ENCODE measurements at regions of chr1 and their contacts with region 1.

Region 1: GRCh38 chr1:230084138-230084880 is 17.3 kb downstream of the GALNT2 start:
- DNase-seq: peak; percentile 88
- ATAC-seq: peak; percentile 94
- H3K4me3 Mint-ChIP-seq: peak overlapping the region; percentile 9
- H3K27ac Mint-ChIP-seq: peak overlapping the region; percentile 88
- H3K4me1 Mint-ChIP-seq: peaks cover 67% of the 10 kb centered on the region
- H3K27me3 Mint-ChIP-seq: peaks cover 2% of the 10 kb centered on the region
- CTCF ChIP-seq: no peak

Region 2: GRCh38 chr1:229972600-229973296 is 111.6 kb before region 1 on chr1:
- CTCF ChIA-PET with region 1: no interaction called
- POLR2A ChIA-PET with region 1: no interaction called
- intact Hi-C with region 1: no loop called
- DNase-seq: no peak
- ATAC-seq: no peak
- H3K4me3 Mint-ChIP-seq: no peak overlapping the region
- H3K27ac Mint-ChIP-seq: no peak overlapping the region
- H3K4me1 Mint-ChIP-seq: no peaks in the 10 kb centered on the region
- H3K27me3 Mint-ChIP-seq: peaks cover 7% of the 10 kb centered on the region
- CTCF ChIP-seq: peak; percentile 30

Region 3: GRCh38 chr1:230031131-230031530 is 53.2 kb before region 1 on chr1:
- CTCF ChIA-PET with region 1: no interaction called
- POLR2A ChIA-PET with region 1: no interaction called
- intact Hi-C with region 1: no loop called
- DNase-seq: peak; percentile 16
- ATAC-seq: peak; percentile 81
- H3K4me3 Mint-ChIP-seq: no peak overlapping the region
- H3K27ac Mint-ChIP-seq: no peak overlapping the region
- H3K4me1 Mint-ChIP-seq: peaks cover 15% of the 10 kb centered on the region
- H3K27me3 Mint-ChIP-seq: no peaks in the 10 kb centered on the region
- CTCF ChIP-seq: no peak

Region 4: GRCh38 chr1:230067871-230068620 is 16.3 kb before region 1 on chr1:
- CTCF ChIA-PET with region 1: interaction called, 21 read pairs
- POLR2A ChIA-PET with region 1: interaction called, 20 read pairs
- intact Hi-C with region 1: no loop called
- DNase-seq: peak; percentile 26
- ATAC-seq: no peak
- H3K4me3 Mint-ChIP-seq: peak overlapping the region; percentile 88
- H3K27ac Mint-ChIP-seq: peak overlapping the region; percentile 90
- H3K4me1 Mint-ChIP-seq: peaks cover 54% of the 10 kb centered on the region
- H3K27me3 Mint-ChIP-seq: no peaks in the 10 kb centered on the region
- CTCF ChIP-seq: no peak

Region 5: DNA sequence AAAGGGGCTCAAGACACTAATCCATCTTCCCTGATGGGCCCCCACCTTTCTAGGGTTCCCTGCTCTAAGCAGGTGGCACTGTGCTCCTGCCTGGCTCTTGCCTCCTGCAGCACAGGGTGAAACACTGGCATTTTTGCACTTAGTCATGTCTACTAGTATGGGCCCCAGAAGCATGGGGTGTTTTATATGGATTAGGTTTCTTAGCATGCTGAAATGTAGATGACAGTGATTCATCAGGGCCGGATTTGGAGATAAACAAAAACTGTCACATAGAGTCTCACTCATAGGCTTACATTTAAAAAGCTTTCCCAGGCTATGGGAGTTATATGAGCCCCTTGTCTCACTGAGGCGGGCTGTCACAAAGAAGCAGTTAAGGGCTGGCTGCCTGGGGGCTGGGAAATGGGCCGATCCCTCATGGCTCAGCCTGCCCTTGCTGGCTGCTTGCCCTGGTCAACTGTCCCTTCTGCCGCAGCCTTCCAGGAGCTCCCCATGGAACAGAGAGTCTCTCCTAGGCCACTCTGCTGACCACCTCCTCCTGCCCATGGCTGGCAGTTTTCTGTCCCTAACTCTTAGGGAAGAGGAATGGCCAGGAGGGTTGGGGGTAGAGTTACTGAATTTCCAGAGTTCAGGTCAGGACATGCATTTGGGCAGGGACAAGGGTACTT is 10.8 kb before region 1 on chr1:
- CTCF ChIA-PET with region 1: interaction called, 21 read pairs
- POLR2A ChIA-PET with region 1: interaction called, 20 read pairs
- intact Hi-C with region 1: no loop called
- DNase-seq: no peak
- ATAC-seq: peak; percentile 9
- H3K4me3 Mint-ChIP-seq: no peak overlapping the region
- H3K27ac Mint-ChIP-seq: no peak overlapping the region
- H3K4me1 Mint-ChIP-seq: peaks cover 78% of the 10 kb centered on the region
- H3K27me3 Mint-ChIP-seq: no peaks in the 10 kb centered on the region
- CTCF ChIP-seq: no peak

Region 6: GRCh38 chr1:230104395-230105244 is 20.3 kb after region 1 on chr1:
- CTCF ChIA-PET with region 1: interaction called, 10 read pairs
- POLR2A ChIA-PET with region 1: interaction called, 32 read pairs
- intact Hi-C with region 1: no loop called
- DNase-seq: peak; percentile 97
- ATAC-seq: peak; percentile 84
- H3K4me3 Mint-ChIP-seq: peak overlapping the region; percentile 45
- H3K27ac Mint-ChIP-seq: peak overlapping the region; percentile 87
- H3K4me1 Mint-ChIP-seq: peaks cover 81% of the 10 kb centered on the region
- H3K27me3 Mint-ChIP-seq: no peaks in the 10 kb centered on the region
- CTCF ChIP-seq: no peak

Measured in activated CD8-positive, alpha-beta T cell treated with anti-CD3 and anti-CD28 coated beads for 36 hours (primary cell).